WTC11 (cell line): ENCODE measurements at regions of chr1 and their contacts with region 1.

Region 1: DNA sequence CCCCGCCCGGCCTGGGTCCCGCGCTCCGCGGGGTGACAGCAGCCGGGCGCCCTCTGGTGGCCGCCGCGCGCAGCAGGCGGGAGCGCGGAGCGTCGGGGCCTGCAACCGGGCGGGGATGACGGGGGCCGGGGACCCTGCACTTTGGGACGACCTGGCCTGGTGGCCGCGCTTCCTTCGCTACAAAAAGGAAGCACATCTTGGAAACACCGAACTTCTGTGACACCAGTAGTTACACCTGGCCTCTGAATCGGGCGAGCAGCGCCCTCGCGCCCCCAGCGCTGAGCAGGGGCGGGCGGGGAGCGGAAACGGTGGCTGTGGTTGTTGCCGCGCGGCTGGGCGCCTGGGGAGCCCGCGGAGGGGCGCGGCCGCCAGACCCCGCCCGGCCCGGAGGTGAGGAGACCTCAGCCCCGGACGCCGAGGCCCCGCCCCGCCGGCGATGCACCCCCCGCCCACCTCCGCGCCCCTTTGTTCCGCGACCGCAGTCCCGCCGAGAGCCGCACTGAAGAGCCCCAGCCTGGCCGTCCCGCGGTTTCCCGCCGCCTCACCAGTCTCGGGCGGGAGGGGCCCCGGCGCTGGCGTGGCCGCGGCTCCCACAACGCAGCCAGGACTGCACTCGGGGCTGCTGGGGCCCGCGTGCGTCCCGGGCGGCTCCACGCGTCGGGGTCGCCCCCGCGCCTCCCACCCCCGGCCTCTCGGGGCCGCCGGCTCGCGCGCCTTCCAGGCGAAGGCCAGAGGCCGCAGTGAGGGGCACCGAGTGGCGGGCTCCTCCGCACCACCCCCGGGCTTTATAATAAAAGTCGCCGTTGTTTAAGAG is 59.3 kb downstream of the H3-3A start:
- DNase-seq: peak; percentile 89
- ATAC-seq: peak; percentile 74
- H3K4me3 Mint-ChIP-seq: peak overlapping the region; percentile 83
- H3K27ac Mint-ChIP-seq: no peak overlapping the region
- H3K4me1 Mint-ChIP-seq: peaks cover 49% of the 10 kb centered on the region
- H3K27me3 Mint-ChIP-seq: peaks cover 20% of the 10 kb centered on the region
- CTCF ChIP-seq: peak; percentile 93

Region 2: GRCh38 chr1:226062558-226063223 is 59.1 kb before region 1 on chr1 and contains the start of gene H3-3A:
- CTCF ChIA-PET with region 1: interaction called, 49 read pairs
- POLR2A ChIA-PET with region 1: interaction called, 10 read pairs
- DNase-seq: peak; percentile 98
- ATAC-seq: peak; percentile 74
- H3K4me3 Mint-ChIP-seq: peak within 1 kb of the TSS; percentile 100
- H3K27ac Mint-ChIP-seq: peak within 1 kb of the TSS; percentile 99
- H3K4me1 Mint-ChIP-seq: peaks cover 43% of the 10 kb centered on the region
- H3K27me3 Mint-ChIP-seq: no peaks in the 10 kb centered on the region; the same call in 1 of the 2 replicates
- CTCF ChIP-seq: no peak
- total RNA-seq, gene H3-3A: 894 to 987 TPM (median 963 TPM) in 3 replicates

Region 3: GRCh38 chr1:226109829-226110248 is 12.0 kb before region 1 on chr1:
- CTCF ChIA-PET with region 1: interaction called, 65 read pairs
- POLR2A ChIA-PET with region 1: interaction called, 6 read pairs
- DNase-seq: peak; percentile 83
- ATAC-seq: peak; percentile 77
- H3K4me3 Mint-ChIP-seq: peak overlapping the region; percentile 90
- H3K27ac Mint-ChIP-seq: peak overlapping the region; percentile 85
- H3K4me1 Mint-ChIP-seq: peaks cover 46% of the 10 kb centered on the region
- H3K27me3 Mint-ChIP-seq: peaks cover 20% of the 10 kb centered on the region
- CTCF ChIP-seq: no peak

Region 4: DNA sequence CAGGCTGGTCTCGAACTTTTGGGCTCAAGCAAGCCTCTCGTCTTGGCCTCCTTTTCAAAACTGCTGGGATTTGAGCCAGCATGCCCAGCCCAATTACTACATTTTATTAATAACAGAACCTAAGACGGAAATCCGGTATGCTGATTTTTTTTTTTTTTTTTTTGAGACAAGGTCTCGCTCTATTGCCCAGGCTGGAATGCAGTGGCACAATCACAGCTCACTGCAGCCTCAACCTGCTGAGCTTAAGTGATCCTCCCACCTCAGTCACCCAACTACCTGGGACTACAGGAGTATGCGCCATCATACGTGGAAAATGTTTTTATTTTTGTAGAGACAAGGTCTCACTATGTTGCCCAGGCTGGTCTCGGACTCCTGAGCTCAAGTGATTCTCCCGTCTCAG is 44.5 kb after region 1 on chr1:
- CTCF ChIA-PET with region 1: interaction called, 10 read pairs
- POLR2A ChIA-PET with region 1: no interaction called
- DNase-seq: no peak
- ATAC-seq: no peak
- H3K4me3 Mint-ChIP-seq: no peak overlapping the region
- H3K27ac Mint-ChIP-seq: no peak overlapping the region
- H3K4me1 Mint-ChIP-seq: no peaks in the 10 kb centered on the region
- H3K27me3 Mint-ChIP-seq: no peaks in the 10 kb centered on the region
- CTCF ChIP-seq: no peak

Region 5: GRCh38 chr1:226201029-226201593 is 79.3 kb after region 1 on chr1:
- CTCF ChIA-PET with region 1: interaction called, 92 read pairs
- POLR2A ChIA-PET with region 1: no interaction called
- DNase-seq: peak; percentile 60
- ATAC-seq: peak; percentile 75
- H3K4me3 Mint-ChIP-seq: no peak overlapping the region
- H3K27ac Mint-ChIP-seq: no peak overlapping the region
- H3K4me1 Mint-ChIP-seq: peaks cover 19% of the 10 kb centered on the region
- H3K27me3 Mint-ChIP-seq: no peaks in the 10 kb centered on the region; the same call in 1 of the 2 replicates
- CTCF ChIP-seq: no peak

Region 6: GRCh38 chr1:226223786-226224244 is 102.0 kb after region 1 on chr1:
- CTCF ChIA-PET with region 1: interaction called, 22 read pairs
- POLR2A ChIA-PET with region 1: no interaction called
- DNase-seq: peak; percentile 69
- ATAC-seq: peak; percentile 52
- H3K4me3 Mint-ChIP-seq: peak overlapping the region; percentile 83
- H3K27ac Mint-ChIP-seq: no peak overlapping the region
- H3K4me1 Mint-ChIP-seq: peaks cover 29% of the 10 kb centered on the region
- H3K27me3 Mint-ChIP-seq: peaks cover 22% of the 10 kb centered on the region
- CTCF ChIP-seq: no peak

Region 7: GRCh38 chr1:226362361-226362760 is 240.6 kb after region 1 on chr1:
- CTCF ChIA-PET with region 1: interaction called, 14 read pairs
- POLR2A ChIA-PET with region 1: no interaction called
- DNase-seq: no peak
- ATAC-seq: no peak
- H3K4me3 Mint-ChIP-seq: no peak overlapping the region
- H3K27ac Mint-ChIP-seq: no peak overlapping the region
- H3K4me1 Mint-ChIP-seq: no peaks in the 10 kb centered on the region
- H3K27me3 Mint-ChIP-seq: no peaks in the 10 kb centered on the region
- CTCF ChIP-seq: no peak